ENCODE measurements at regions of chr10 and their contacts with region 1.

Region 1: DNA sequence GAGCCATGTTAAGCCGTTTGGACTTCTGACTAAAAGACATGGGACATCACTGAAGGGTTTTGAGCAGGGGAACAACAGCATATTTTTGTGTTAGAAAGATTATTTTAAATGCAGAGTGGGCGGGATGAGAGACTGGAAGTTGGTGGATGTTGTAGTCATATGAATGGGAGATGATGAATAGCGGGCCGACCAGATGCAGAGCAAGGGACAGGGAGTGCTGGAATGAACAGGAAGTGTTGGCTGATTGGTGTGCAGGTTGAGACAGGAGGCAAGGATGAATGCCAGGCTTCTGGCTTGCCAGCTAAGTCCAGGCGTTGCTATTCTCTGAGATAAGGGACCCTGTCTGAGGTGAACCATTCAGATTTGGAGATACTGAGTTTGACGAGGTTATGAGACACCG is 38.0 kb downstream of the GAD2 start:
- DNase-seq: no peak
- ATAC-seq: no peak
- H3K4me3 ChIP-seq: no peak overlapping the region
- H3K4me3 Mint-ChIP-seq: no peak overlapping the region
- H3K27ac ChIP-seq: no peak overlapping the region
- H3K27ac Mint-ChIP-seq: no peak overlapping the region
- H3K4me1 ChIP-seq: no peaks in the 10 kb centered on the region
- H3K4me1 Mint-ChIP-seq: no peaks in the 10 kb centered on the region
- H3K27me3 ChIP-seq: no peaks in the 10 kb centered on the region
- H3K27me3 Mint-ChIP-seq: peaks cover 17 to 22% of the 10 kb centered on the region in 2 donors
- CTCF ChIP-seq: no peak

Region 2: GRCh38 chr10:26291721-26292480 is 37.3 kb after region 1 on chr10:
- intact Hi-C with region 1: loop called (anchors 1 kb)
- DNase-seq: no peak
- ATAC-seq: no peak
- H3K4me3 ChIP-seq: no peak overlapping the region
- H3K4me3 Mint-ChIP-seq: no peak overlapping the region
- H3K27ac ChIP-seq: no peak overlapping the region
- H3K27ac Mint-ChIP-seq: no peak overlapping the region
- H3K4me1 ChIP-seq: no peaks in the 10 kb centered on the region
- H3K4me1 Mint-ChIP-seq: no peaks in the 10 kb centered on the region
- H3K27me3 ChIP-seq: no peaks in the 10 kb centered on the region
- H3K27me3 Mint-ChIP-seq: peaks cover 29 to 52% of the 10 kb centered on the region in 2 donors
- CTCF ChIP-seq: no peak

Measured in natural killer cell (primary cell).